CD4-positive, alpha-beta memory T cell (primary cell): ENCODE measurements at regions of chr3 and their contacts with region 1.

Region 1: DNA sequence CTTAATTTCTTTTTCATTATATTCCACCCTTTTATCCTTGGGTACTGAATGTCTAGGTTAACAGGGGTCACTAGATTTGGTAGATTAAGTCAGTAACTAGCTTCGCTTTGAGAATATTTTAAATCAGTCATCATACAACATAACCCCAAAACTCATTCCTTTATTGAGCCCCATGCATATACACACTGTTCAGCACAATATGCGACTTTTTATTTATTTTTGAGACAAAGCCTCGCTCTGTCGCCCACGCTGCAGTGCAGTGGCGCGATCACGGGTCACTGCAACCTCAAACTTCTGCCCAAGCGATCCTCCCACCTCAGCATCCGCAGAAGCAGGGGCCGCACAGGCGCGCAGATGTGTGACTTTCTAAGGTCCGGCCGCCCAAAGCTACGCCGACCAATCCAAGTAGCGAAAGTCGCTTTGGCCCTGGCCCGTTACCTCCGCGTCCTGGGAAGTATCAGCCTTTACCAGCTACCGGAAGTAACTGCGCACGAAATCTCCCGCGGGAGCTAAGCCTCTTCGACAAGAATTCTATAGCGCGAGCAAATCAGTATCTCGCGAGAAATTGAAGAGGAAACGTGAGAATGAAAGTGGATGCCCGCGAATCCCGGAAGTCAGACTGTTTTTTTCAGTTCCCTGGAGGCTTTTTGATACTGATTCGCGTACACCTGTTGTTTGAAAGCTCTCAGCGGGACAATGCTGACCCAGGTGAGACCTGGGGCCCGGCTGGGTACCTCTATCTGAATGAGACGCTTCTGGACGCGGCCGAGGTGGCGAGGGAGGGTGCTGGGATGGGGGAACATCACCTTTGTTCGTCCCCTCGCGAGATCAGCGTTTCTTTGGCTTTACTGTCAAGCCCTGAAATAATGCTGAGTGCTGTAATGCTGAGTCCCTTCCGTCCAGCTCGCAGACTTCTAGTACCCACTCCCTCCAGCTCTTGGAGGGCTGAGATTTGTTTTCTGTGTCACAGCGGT is at the starts of genes DHFR2 and NSUN3:
- DNase-seq: peak; percentile 91 to 94 (median 92)
- H3K4me3 ChIP-seq: peak within 1 kb of the TSS; percentile 97
- H3K4me3 Mint-ChIP-seq: peak within 1 kb of the TSS; percentile 97 to 100 (median 98)
- H3K27ac ChIP-seq: peak within 1 kb of the TSS; percentile 95
- H3K27ac Mint-ChIP-seq: peak within 1 kb of the TSS; percentile 99 to 100 (median 100)
- H3K4me1 ChIP-seq: peaks cover 45% of the 10 kb centered on the region
- H3K4me1 Mint-ChIP-seq: peaks cover 32 to 62% (median 47%) of the 10 kb centered on the region in 4 donors
- H3K27me3 ChIP-seq: no peaks in the 10 kb centered on the region
- H3K27me3 Mint-ChIP-seq: no peaks in the 10 kb centered on the region
- total RNA-seq, gene DHFR2: 15.9 TPM
- total RNA-seq, gene NSUN3: 20.4 to 23.1 TPM

Region 2: DNA sequence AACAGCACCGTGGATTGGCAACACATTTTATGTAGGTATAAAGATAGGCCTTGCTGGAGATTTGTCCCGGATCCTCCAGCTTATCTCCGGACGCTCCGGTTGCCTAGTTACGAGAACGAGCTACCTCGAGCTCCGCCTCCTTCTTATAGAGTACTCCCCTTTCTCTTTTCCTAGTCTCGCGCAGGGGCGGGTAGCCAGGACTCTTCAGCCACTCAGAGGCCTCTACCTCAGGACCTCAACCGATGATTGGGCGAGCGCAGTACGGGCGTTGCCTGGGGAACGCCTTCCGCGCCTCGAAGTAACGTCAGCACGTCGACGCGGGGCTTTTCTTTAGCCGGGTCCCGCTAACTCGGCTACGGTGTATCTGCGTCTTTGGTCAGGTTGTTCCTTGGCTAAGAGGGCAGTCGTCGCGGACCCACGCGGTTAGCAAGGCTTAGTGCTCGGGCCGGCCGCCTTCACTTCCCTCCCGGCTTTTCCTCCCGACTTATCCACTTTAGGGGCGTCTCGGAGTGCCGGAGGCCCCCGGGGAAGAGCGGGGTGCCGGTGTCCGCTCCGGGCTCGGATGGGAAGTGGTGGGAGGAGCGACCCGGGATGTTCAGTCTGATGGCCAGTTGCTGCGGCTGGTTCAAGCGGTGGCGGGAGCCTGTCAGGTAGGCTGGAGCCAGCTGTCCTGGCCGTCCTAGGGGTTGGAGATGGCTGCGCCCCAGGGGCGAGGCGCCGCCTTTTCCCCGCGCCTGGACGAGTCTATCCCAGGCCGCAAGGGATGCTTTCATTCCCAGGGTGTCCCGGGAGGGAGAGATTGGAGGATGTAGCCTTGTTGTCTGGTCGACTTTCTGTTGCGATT is 82.7 kb before region 1 on chr3 and contains the start of gene ARL13B:
- CTCF ChIA-PET with region 1: interaction called, 4 read pairs
- POLR2A ChIA-PET with region 1: interaction called, 21 read pairs
- intact Hi-C with region 1: loop called (anchors 1 kb)
- DNase-seq: peak; percentile 91 to 97 (median 94)
- H3K4me3 ChIP-seq: peak within 1 kb of the TSS; percentile 78 to 98
- H3K4me3 Mint-ChIP-seq: peak within 1 kb of the TSS; percentile 80 to 94 (median 90)
- H3K27ac ChIP-seq: peak within 1 kb of the TSS; percentile 93
- H3K27ac Mint-ChIP-seq: peak within 1 kb of the TSS; percentile 92 to 97 (median 94)
- H3K4me1 ChIP-seq: peaks cover 16% of the 10 kb centered on the region
- H3K4me1 Mint-ChIP-seq: peaks cover 11 to 26% (median 23%) of the 10 kb centered on the region in 4 donors
- H3K27me3 ChIP-seq: no peaks in the 10 kb centered on the region
- H3K27me3 Mint-ChIP-seq: no peaks in the 10 kb centered on the region
- total RNA-seq, gene ARL13B: 11.7 to 12.0 TPM

Region 3: DNA sequence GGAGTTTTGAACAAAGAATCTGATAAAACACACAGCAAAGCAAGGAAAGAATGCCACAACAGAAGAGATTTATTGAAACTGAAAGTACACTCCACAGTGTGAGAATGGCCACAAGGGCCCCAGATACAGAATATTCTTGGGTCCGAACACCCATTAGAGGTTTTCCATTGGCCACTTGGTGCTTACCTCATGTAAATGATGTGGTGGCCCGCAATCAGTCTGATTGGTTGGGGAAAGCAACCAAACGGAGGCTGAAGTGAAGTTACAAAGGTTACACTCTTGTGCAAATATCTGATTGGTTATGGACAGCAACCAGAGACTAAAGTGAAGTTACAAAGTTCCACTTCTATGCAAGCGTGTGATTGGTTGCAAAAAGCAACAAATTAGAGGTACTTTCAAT is 20.5 kb after region 1 on chr3:
- CTCF ChIA-PET with region 1: interaction called, 5 read pairs
- POLR2A ChIA-PET with region 1: interaction called, 33 read pairs
- intact Hi-C with region 1: loop called (anchors 1 kb)
- DNase-seq: no peak
- H3K4me3 ChIP-seq: no peak overlapping the region
- H3K4me3 Mint-ChIP-seq: no peak overlapping the region
- H3K27ac ChIP-seq: no peak overlapping the region
- H3K27ac Mint-ChIP-seq: peak overlapping the region in 3 of 7 donors; percentile 6 to 74 (median 53)
- H3K4me1 ChIP-seq: peaks cover 26% of the 10 kb centered on the region
- H3K4me1 Mint-ChIP-seq: peaks cover 35 to 46% (median 38%) of the 10 kb centered on the region in 4 donors
- H3K27me3 ChIP-seq: no peaks in the 10 kb centered on the region
- H3K27me3 Mint-ChIP-seq: no peaks in the 10 kb centered on the region

Region 4: GRCh38 chr3:94256888-94257813 is 194.4 kb after region 1 on chr3:
- CTCF ChIA-PET with region 1: no interaction called
- POLR2A ChIA-PET with region 1: no interaction called
- intact Hi-C with region 1: no loop called
- DNase-seq: no peak
- H3K4me3 ChIP-seq: no peak overlapping the region
- H3K4me3 Mint-ChIP-seq: no peak overlapping the region
- H3K27ac ChIP-seq: no peak overlapping the region
- H3K27ac Mint-ChIP-seq: no peak overlapping the region
- H3K4me1 ChIP-seq: no peaks in the 10 kb centered on the region
- H3K4me1 Mint-ChIP-seq: no peaks in the 10 kb centered on the region
- H3K27me3 ChIP-seq: no peaks in the 10 kb centered on the region
- H3K27me3 Mint-ChIP-seq: peaks cover 3 to 5% of the 10 kb centered on the region in 2 donors

Region 5: GRCh38 chr3:94379264-94379663 is 316.5 kb after region 1 on chr3:
- CTCF ChIA-PET with region 1: no interaction called
- POLR2A ChIA-PET with region 1: no interaction called
- intact Hi-C with region 1: no loop called
- DNase-seq: no peak
- H3K4me3 ChIP-seq: no peak overlapping the region
- H3K4me3 Mint-ChIP-seq: no peak overlapping the region
- H3K27ac ChIP-seq: no peak overlapping the region
- H3K27ac Mint-ChIP-seq: no peak overlapping the region
- H3K4me1 ChIP-seq: no peaks in the 10 kb centered on the region
- H3K4me1 Mint-ChIP-seq: no peaks in the 10 kb centered on the region
- H3K27me3 ChIP-seq: no peaks in the 10 kb centered on the region
- H3K27me3 Mint-ChIP-seq: no peaks in the 10 kb centered on the region

Region 6: DNA sequence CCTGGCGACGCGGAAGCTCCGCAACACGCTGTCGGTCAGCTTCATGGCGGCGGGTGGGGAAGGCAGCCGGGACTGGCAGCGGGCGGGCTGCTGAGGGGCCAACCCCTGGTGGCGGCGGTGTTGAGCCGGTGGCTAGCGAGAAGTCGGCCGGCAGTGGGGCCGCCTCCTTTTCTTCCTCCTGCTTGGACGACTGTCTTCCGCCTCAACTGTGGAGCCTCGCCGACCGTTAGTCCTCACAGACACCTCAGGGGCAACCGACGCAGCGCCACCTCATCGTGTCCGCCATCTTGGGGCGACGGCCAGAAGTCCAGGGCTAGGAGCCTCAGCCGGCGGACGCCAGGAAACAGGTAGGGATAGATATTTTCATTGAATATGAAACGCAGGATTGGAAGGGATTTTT is 875.3 kb after region 1 on chr3:
- CTCF ChIA-PET with region 1: no interaction called
- POLR2A ChIA-PET with region 1: no interaction called
- intact Hi-C with region 1: no loop called
- DNase-seq: no peak
- H3K4me3 ChIP-seq: no peak overlapping the region
- H3K4me3 Mint-ChIP-seq: no peak overlapping the region
- H3K27ac ChIP-seq: no peak overlapping the region
- H3K27ac Mint-ChIP-seq: no peak overlapping the region
- H3K4me1 ChIP-seq: no peaks in the 10 kb centered on the region
- H3K4me1 Mint-ChIP-seq: no peaks in the 10 kb centered on the region
- H3K27me3 ChIP-seq: no peaks in the 10 kb centered on the region
- H3K27me3 Mint-ChIP-seq: no peaks in the 10 kb centered on the region